ENCODE measurements at regions of chr6 and their contacts with region 1.

Region 1: DNA sequence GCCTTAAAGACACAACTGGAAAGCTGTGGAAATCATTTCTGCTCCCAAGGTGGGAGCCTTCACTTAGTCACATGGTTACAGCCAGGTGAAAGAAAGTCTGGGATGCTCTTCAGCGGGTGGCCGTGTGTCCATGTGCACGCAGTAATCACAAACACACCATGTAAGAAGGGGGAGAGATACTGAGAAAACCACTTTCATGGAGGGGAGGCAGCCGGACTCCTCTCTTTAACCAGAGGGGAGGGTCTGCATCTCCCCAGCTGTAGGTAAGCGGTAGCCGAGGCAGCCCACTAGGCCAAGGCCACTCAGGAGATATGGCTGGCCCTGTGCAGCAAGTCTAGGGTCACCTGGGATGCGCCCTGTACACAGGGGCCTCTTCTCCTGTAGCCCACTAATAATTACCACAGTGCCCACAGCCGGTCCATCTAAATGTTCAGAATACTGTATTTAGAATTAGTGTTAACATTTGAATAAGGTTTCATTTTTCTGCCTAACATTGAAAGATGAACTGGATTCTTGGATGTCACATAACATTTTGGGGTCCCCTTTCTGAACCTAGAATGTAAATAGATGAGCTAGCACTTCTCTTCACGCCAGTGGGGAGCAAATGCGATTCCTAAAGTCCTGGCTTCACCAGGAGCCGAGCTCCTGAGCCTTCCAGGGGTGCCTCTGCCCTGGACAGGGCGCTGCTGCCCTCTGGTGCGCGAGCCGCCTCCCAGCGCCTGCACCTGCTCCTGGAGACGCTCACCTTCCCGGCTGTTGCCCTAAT is 15.9 kb downstream of the GPR31 start:
- DNase-seq: peak; percentile 69
- ATAC-seq: peak; percentile 88
- H3K4me3 Mint-ChIP-seq: no peak overlapping the region
- H3K27ac Mint-ChIP-seq: no peak overlapping the region
- H3K4me1 Mint-ChIP-seq: peaks cover 23% of the 10 kb centered on the region
- H3K27me3 Mint-ChIP-seq: peaks cover 15% of the 10 kb centered on the region

Region 2: GRCh38 chr6:166999145-166999883 is 142.5 kb before region 1 on chr6 and contains the start of gene CEP43:
- CTCF ChIA-PET with region 1: interaction called, 20 read pairs
- DNase-seq: peak; percentile 94
- ATAC-seq: peak; percentile 94
- H3K4me3 Mint-ChIP-seq: peak within 1 kb of the TSS; percentile 88
- H3K27ac Mint-ChIP-seq: peak within 1 kb of the TSS; percentile 87
- H3K4me1 Mint-ChIP-seq: peaks cover 26% of the 10 kb centered on the region
- H3K27me3 Mint-ChIP-seq: no peaks in the 10 kb centered on the region
- total RNA-seq, gene CEP43: 28.2 to 35.6 TPM

Region 3: DNA sequence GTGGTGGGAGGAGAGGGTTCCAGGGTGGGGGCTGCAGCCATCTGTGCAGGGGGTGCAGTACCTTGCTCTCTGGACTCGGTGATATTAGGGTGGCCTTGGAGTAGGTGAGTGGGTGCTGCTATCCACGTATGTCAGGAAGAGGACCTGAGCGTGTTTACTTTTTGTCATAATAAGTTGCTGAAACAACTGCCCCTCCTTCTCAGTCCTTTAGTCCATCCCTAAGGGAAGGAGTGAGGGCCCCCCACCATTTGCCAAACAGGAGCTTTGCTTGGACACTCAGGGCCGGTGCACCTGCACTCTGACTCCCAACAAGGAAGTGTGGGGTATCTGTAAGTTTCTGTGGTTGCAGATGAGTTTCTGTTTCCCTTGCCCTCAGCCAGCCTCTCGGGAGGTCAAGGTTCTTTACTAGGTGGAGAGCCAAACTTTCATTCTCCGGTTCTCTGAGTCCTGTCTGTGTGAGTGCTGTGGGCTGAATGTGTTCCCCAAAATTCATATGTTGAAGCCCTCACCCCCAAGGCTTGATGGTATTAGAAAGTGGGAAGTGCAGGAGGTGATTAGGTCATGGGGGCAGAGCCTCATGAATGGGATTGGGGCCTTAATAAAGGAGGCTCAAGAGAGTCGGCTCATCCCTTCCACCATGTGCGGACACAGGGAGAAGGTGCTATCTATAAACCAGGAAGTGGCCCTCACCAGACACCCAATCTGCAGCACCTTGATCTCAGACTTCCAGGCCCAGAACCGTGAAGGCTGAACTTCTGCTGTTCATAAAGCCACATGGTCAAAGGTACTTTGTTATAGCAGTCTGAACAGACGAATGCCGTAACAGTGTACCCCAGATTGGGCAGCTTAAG is 38.6 kb before region 1 on chr6:
- CTCF ChIA-PET with region 1: no interaction called
- DNase-seq: peak; percentile 59
- ATAC-seq: peak; percentile 83
- H3K4me3 Mint-ChIP-seq: no peak overlapping the region
- H3K27ac Mint-ChIP-seq: peak overlapping the region; percentile 81
- H3K4me1 Mint-ChIP-seq: peaks cover 38% of the 10 kb centered on the region
- H3K27me3 Mint-ChIP-seq: peaks cover 2% of the 10 kb centered on the region

Region 4: GRCh38 chr6:167122041-167122826 is 19.6 kb before region 1 on chr6:
- CTCF ChIA-PET with region 1: interaction called, 16 read pairs
- DNase-seq: peak; percentile 82
- ATAC-seq: peak; percentile 70
- H3K4me3 Mint-ChIP-seq: peak overlapping the region; percentile 78
- H3K27ac Mint-ChIP-seq: peak overlapping the region; percentile 96
- H3K4me1 Mint-ChIP-seq: peaks cover 78% of the 10 kb centered on the region
- H3K27me3 Mint-ChIP-seq: peaks cover 2% of the 10 kb centered on the region